ENCODE measurements at regions of chr1 and their contacts with region 1.

Region 1: DNA sequence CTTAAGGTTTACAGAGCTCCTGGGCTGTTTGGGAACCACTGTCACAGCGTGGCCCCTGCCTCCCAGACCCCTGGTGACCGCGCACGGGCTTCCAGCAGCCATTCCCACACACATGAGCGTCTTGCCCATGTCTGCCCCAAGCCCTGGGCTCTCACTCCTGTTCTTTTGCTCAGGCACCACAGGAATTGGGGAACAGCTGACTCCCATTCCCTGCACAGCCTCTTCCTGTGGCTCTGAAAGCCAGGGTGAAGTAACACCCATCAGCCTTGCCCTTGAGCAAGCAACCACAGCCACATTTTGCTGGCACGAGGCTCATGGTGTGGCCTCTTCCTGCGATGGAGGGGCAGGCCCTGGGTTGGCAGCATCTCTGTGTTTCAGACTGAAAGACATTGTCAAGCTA is 14.3 kb upstream of the GPR157 start:
- DNase-seq: peak in 1 of 2 donors; percentile 50
- ATAC-seq: peak in 2 of 4 donors; percentile 26 to 38
- H3K4me3 ChIP-seq: no peak overlapping the region
- H3K27ac ChIP-seq: no peak overlapping the region
- H3K4me1 ChIP-seq: no peaks in the 10 kb centered on the region
- H3K27me3 ChIP-seq: no peaks in the 10 kb centered on the region
- CTCF ChIP-seq: no peak

Region 2: DNA sequence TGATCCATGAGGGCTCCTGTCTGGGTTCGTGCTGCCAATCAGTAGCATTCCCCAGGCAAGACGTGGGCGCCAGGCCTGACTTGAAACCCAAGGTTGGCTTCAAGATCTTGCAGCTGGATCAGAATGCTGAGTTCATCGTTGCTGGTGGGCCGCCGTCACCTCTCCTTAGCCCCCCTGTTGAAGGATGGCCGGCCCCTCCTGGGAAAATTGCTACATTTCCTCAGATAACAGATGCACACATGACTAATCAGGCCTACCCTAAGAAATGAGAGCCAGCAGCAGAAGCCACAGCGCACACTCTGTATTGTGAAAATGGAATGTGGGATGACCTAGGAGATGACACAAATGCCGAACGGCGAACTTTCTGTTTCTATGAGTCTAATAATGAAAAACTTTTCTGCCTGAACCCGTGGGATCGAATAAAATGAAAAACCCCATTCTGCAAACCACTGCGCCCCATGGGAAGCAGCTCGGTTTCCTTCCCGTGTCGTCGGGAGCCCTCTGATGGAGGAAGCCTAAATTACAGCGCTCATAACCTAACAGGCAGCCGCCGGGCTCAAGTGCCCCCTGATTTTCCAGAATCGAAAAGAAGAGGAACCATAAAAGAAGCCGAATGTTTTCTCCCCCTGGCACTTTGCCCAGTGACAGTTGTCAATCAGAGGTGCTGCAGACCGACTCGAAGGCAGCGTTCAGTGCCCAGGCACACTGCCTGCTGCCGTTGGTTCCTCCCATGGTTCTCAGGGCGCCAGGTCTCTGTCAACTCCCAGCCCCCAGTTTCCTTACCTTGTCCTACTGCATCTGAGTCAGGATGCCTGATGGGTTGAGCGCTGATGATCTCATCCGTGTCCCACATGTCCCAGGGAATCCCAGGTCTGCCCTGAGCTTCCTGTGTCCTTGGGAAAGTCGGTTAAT is 53.1 kb after region 1 on chr1:
- intact Hi-C with region 1: loop called in 1 of 2 experiments (anchors 5 kb)
- DNase-seq: peak; percentile 72 to 80
- ATAC-seq: peak; percentile 58 to 79 (median 64)
- H3K4me3 ChIP-seq: peak overlapping the region; percentile 40
- H3K27ac ChIP-seq: peak overlapping the region; percentile 42
- H3K4me1 ChIP-seq: peaks cover 26% of the 10 kb centered on the region
- H3K27me3 ChIP-seq: peaks cover 0 to 20% (median 1%) of the 10 kb centered on the region in 3 donors
- CTCF ChIP-seq: peak; percentile 80